B cell (primary cell): ENCODE measurements at regions of chr3 and their contacts with region 1.

Region 1: DNA sequence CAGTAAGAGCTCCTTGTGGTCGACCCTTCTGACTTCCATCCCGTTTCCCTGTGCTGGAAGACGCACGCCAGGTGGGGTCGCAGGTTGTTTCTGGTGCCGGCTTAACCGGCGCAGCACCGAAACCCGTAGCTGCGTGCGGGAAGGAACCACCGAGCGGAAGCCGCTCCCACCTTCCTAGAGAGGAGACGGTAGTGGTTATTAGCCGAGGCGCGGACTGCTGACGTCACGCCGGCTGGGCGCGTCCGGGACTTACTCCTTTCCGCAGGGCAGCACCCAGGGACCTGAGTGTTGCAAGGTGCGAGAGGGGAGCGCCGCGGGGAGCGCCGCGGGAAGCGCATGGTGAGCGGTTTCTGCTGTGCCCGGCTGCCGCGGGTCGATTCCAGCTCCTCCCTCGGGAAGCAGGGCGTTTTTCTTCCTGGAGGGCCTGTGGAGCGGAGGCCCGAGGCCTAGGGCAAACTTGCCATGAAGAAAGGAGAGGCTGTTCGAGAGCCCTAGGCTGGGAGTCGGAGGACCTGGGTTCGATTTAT is at the start of gene ZNF501:
- DNase-seq: peak; percentile 90
- ATAC-seq: peak; percentile 94
- H3K4me3 ChIP-seq: peak within 1 kb of the TSS; percentile 35 to 89 (median 77)
- H3K4me3 Mint-ChIP-seq: peak within 1 kb of the TSS; percentile 96
- H3K27ac ChIP-seq: peak within 1 kb of the TSS; percentile 15 to 32
- H3K27ac Mint-ChIP-seq: peak within 1 kb of the TSS; percentile 86
- H3K4me1 ChIP-seq: peaks cover 6 to 12% of the 10 kb centered on the region in 2 donors
- H3K4me1 Mint-ChIP-seq: peaks cover 13% of the 10 kb centered on the region
- H3K27me3 ChIP-seq: no peaks in the 10 kb centered on the region
- H3K27me3 Mint-ChIP-seq: no peaks in the 10 kb centered on the region
- CTCF ChIP-seq: no peak
- total RNA-seq, gene ZNF501: 6.1 and 7.2 TPM in 2 replicates

Region 2: DNA sequence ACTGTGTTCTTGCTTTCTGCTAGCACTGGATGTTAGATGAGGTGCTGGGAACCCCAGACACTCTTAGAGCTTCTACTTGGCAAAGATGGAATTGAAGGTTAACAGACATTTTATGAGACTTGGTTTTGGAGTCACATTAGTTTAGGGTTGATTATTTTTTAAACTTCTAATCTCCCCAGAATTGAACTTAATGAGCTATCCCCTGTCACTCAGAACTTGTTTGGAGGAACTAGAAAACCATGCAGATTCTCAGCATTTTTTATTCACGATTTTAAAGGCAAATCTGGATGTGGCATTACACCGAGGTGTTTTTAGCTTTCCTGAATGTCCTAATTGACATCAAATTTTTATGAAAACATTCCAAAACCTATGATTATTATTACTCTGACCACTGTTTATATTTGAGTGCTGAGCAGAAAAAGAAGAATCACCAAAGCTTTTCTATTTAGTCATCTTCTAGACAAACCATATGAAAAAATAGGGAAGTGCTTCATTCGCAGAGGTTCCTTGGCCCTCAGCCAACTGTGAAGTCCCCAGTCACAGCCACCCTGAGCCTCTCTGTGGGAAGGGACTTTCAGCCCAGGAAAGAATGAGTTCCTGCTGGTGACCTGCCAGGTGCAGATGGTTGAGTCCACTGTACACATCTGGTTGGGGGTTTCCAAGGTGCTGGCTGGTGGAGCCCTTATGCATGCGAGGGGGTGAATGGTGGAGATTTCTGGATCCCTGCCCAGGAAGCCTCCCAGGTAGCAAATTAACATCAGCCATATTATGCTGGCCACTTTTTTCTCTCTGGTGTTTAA is 683.8 kb before region 1 on chr3:
- CTCF ChIA-PET with region 1: no interaction called
- POLR2A ChIA-PET with region 1: no interaction called
- intact Hi-C with region 1: no loop called
- DNase-seq: peak; percentile 94
- ATAC-seq: peak; percentile 95
- H3K4me3 ChIP-seq: peak overlapping the region in 1 of 5 experiments; percentile 5
- H3K4me3 Mint-ChIP-seq: peak overlapping the region; percentile 44
- H3K27ac ChIP-seq: peak overlapping the region; percentile 57 to 75
- H3K27ac Mint-ChIP-seq: peak overlapping the region; percentile 80
- H3K4me1 ChIP-seq: peaks cover 53 to 68% of the 10 kb centered on the region in 2 donors
- H3K4me1 Mint-ChIP-seq: peaks cover 61% of the 10 kb centered on the region
- H3K27me3 ChIP-seq: no peaks in the 10 kb centered on the region
- H3K27me3 Mint-ChIP-seq: no peaks in the 10 kb centered on the region
- CTCF ChIP-seq: no peak

Region 3: DNA sequence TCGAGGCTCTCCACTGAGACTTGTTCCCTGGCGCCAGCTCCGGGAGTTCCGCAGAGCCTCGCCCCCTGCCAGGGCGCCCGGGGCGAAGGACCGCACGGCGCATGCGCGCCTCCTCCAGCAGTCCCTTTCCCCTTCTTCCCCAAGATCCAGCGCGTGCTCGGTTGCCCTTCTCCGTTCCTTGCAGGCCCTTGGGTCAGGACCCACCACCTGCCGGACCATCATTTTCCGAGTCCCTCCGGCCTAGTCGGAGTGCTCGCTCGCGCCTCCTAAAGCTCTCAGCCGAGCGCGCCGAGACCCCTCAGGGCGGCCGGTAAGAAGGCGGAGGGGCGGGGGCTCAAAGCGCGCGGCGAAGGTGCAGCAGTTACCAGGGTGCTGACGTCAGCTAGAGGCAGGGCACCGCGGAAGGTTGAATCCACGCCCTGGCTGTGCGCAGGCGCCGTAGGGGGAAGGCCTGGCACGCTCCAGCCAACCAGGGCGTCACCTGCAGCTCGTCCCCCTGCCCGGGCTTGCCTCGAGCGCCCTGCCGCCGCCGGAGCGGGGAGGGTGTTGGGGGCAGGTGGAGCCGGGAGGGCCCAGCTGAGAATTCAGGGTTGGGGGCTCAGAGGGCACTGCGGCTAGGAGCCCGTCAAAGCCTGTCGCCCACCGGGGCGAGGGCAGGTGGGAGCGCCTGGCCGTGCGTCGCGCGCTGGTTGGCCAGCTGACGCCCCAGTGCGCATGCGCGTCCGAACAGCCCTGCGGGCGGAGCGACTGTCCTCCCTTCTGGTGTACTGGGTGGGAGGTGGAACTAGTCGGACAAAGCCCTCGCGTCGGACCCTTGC is 391.2 kb before region 1 on chr3 and contains the start of gene TCAIM:
- CTCF ChIA-PET with region 1: no interaction called
- POLR2A ChIA-PET with region 1: no interaction called
- intact Hi-C with region 1: loop called (anchors 1 kb)
- DNase-seq: peak; percentile 100
- ATAC-seq: peak; percentile 90
- H3K4me3 ChIP-seq: peak within 1 kb of the TSS; percentile 85 to 97 (median 87)
- H3K4me3 Mint-ChIP-seq: peak within 1 kb of the TSS; percentile 99
- H3K27ac ChIP-seq: peak within 1 kb of the TSS; percentile 80 to 88
- H3K27ac Mint-ChIP-seq: peak within 1 kb of the TSS; percentile 99
- H3K4me1 ChIP-seq: peaks cover 16 to 19% of the 10 kb centered on the region in 2 donors
- H3K4me1 Mint-ChIP-seq: peaks cover 29% of the 10 kb centered on the region
- H3K27me3 ChIP-seq: no peaks in the 10 kb centered on the region
- H3K27me3 Mint-ChIP-seq: peaks cover 9% of the 10 kb centered on the region
- CTCF ChIP-seq: no peak
- total RNA-seq, gene TCAIM: 15.8 and 16.7 TPM in 2 replicates

Region 4: DNA sequence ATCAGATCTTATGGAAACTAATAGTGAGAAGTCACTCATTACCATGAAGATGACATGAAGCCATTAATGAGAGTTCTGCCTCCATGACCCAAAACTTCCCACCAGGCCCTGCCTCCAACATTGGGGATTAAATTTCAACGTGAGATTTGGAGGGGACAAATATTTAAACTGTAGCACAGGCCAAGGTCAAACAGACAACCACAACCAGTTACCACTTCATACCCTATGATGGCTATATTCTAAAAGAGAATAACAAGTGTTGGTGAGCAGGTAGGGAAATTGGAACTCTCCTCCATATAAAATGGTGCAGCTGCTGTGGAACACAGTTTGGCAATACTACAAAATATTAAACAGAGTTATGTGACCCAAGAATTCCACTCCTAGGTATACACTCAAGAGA is 354.0 kb before region 1 on chr3:
- CTCF ChIA-PET with region 1: no interaction called
- POLR2A ChIA-PET with region 1: no interaction called
- intact Hi-C with region 1: no loop called
- DNase-seq: no peak
- ATAC-seq: no peak
- H3K4me3 ChIP-seq: no peak overlapping the region
- H3K4me3 Mint-ChIP-seq: no peak overlapping the region
- H3K27ac ChIP-seq: no peak overlapping the region
- H3K27ac Mint-ChIP-seq: no peak overlapping the region
- H3K4me1 ChIP-seq: no peaks in the 10 kb centered on the region
- H3K4me1 Mint-ChIP-seq: no peaks in the 10 kb centered on the region
- H3K27me3 ChIP-seq: no peaks in the 10 kb centered on the region
- H3K27me3 Mint-ChIP-seq: no peaks in the 10 kb centered on the region
- CTCF ChIP-seq: no peak

Region 5: DNA sequence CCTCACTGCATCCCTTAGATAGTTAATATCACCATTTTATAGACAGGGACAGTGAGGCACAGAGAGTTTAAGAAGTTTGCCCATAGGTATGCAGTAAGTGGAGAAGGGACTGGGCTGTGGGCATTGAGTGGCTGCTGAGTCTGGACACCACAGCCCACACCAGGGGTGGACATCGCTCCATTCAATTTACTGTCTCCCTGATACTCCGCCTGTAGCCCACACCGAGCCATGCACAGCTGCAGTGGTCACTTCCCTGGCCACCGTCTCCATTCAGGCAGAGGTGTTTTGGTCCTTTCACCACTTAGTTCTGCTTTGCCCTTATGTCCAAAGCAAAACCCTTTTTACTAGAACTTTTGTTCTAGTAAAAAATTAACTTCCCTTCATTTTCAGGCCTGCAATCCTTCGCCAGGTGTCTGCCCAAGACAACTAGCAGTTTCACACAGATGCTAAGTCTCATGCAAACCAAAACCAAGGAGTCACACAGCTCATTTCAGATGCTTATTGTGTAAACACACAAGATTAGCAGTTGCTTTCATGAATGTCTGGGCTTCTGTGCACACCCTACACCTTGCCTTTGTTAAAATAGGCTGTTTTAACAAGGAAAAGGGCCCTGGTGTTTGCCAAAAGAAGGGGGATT is 50.8 kb before region 1 on chr3:
- CTCF ChIA-PET with region 1: no interaction called
- POLR2A ChIA-PET with region 1: no interaction called
- intact Hi-C with region 1: no loop called
- DNase-seq: no peak
- ATAC-seq: no peak
- H3K4me3 ChIP-seq: no peak overlapping the region
- H3K4me3 Mint-ChIP-seq: no peak overlapping the region
- H3K27ac ChIP-seq: no peak overlapping the region
- H3K27ac Mint-ChIP-seq: no peak overlapping the region
- H3K4me1 ChIP-seq: no peaks in the 10 kb centered on the region
- H3K4me1 Mint-ChIP-seq: peaks cover 5% of the 10 kb centered on the region
- H3K27me3 ChIP-seq: no peaks in the 10 kb centered on the region
- H3K27me3 Mint-ChIP-seq: no peaks in the 10 kb centered on the region
- CTCF ChIP-seq: no peak

Region 6: GRCh38 chr3:44712455-44713075 is 16.9 kb before region 1 on chr3 and contains the start of gene ZNF502:
- CTCF ChIA-PET with region 1: interaction called, 15 read pairs
- POLR2A ChIA-PET with region 1: interaction called, 6 read pairs
- intact Hi-C with region 1: loop called (anchors 1 kb)
- DNase-seq: peak; percentile 79
- ATAC-seq: peak; percentile 84
- H3K4me3 ChIP-seq: peak within 1 kb of the TSS; percentile 67 to 75 (median 71)
- H3K4me3 Mint-ChIP-seq: peak within 1 kb of the TSS; percentile 91
- H3K27ac ChIP-seq: peak within 1 kb of the TSS; percentile 38 to 44
- H3K27ac Mint-ChIP-seq: peak within 1 kb of the TSS; percentile 73
- H3K4me1 ChIP-seq: peaks cover 3 to 16% of the 10 kb centered on the region in 2 donors
- H3K4me1 Mint-ChIP-seq: peaks cover 15% of the 10 kb centered on the region
- H3K27me3 ChIP-seq: peaks cover 0 to 11% (median 3%) of the 10 kb centered on the region in 4 experiments
- H3K27me3 Mint-ChIP-seq: peaks cover 20% of the 10 kb centered on the region
- CTCF ChIP-seq: no peak
- total RNA-seq, gene ZNF502: 5.4 and 5.5 TPM in 2 replicates